ENCODE measurements at regions of chr1 and their contacts with region 1.

Region 1: DNA sequence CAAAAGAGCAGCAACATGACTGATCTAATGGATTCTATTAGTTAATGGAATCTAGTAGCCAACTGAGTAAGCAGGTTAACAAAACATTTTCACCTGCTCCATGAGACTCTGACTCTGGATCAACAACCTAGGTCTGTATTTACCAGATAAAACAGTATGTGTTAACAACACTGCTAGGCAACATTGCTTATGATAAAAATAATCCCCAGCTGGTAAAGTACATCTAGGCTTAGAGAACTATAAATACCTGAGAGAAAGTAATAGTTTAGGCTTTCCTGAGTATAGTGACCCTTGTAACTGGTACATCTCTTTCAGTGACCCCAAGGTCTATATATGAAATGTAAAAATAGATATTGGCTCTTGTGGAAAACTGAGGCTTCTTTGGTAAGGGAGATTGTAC is 73.6 kb upstream of the TBX15 start:
- DNase-seq: no peak
- ATAC-seq: no peak

Region 2: GRCh38 chr1:118949315-118949714 is 112.4 kb before region 1 on chr1:
- intact Hi-C with region 1: loop called (anchors 5 kb)
- DNase-seq: no peak
- ATAC-seq: peak; percentile 88

Region 3: DNA sequence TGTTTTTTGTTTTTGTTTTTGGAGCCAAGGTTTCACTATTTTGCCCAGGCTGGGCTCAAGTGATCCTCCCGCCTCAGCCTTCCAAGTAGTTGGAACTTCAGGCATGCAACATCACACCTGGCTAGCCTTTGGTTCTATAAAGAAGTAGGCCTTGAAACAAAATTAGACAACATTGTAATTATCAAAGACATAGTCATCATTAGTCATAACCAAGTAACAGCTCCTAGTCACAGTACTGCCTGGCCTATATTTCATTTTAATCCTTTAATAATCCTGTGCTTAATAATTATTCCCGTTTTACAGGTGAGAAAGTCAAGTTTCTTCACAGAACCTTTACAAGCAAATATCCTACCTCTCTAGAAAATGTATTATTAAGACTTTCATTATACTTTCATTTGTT is 21.2 kb before region 1 on chr1:
- intact Hi-C with region 1: no loop called
- DNase-seq: no peak
- ATAC-seq: no peak